ENCODE measurements at regions of chr18 and their contacts with region 1.

Region 1: DNA sequence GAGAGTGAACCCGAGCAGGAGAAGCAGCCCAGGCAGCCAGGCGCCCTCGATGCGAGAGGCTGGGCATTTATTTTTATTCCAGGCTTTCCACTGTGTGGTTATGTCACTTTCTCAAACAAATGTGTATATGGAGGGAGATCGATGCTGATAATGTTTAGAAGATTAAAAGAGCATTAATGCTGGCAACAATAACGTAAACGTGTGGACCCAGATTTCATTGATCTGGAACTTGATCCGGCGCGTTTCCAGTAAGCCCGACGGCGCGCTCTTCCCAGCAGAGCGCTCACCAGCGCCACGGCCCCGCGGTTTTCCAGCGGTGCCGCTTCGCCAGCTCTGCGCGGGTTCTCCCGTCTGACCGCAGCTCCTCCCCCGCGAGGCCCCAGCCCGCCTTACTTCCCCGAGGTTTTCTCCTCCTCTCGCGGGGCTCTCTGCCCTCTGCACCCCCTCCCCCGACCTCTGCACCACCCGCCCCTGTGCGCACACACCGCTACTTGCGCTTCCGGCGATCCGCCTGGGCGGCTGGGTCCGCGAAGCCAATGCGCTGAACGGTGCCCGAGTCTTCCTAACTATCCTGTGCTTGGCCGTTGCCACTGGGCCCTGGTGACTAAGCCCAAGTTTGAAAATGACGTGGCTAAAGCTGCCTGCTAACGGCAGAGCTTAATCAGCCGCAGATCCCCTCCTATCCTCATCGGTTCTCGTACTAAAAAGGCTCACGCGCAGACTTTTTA is 6.1 kb downstream of the ONECUT2 start:
- DNase-seq: no peak
- H3K4me3 Mint-ChIP-seq: peak overlapping the region; percentile 52
- H3K27ac Mint-ChIP-seq: peak overlapping the region; percentile 78
- H3K4me1 Mint-ChIP-seq: peaks cover 15% of the 10 kb centered on the region
- H3K27me3 Mint-ChIP-seq: peaks cover 78% of the 10 kb centered on the region

Region 2: DNA sequence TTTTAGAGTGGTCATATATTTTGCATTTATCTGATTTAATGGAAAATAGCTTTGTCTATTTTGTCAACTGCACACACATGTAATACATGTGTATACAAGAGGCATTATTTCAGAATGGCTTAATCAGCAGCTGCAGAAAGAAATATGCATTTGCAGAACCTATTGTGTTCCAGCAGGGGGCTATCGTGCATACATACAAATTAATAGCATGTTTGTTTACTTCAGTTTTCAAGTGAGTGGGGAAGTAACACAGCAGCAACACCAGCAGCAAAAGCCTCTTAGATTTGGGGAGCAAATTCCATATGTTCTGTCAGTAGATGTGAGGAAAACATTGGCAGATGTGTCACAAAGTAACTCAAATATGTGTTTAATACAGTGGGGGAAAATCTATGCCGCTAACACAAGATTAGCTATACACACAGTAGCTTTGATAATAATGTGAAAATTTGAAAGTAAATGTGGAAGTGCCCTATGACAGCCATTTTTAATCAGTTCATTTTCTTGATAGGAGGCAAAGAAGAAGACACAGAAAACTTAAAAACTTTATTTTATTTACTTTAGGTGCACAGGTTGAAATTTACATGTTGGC is 571.9 kb before region 1 on chr18:
- intact Hi-C with region 1: loop called (anchors 5 kb)
- DNase-seq: peak; percentile 65
- H3K4me3 Mint-ChIP-seq: no peak overlapping the region
- H3K27ac Mint-ChIP-seq: no peak overlapping the region
- H3K4me1 Mint-ChIP-seq: peaks cover 5% of the 10 kb centered on the region
- H3K27me3 Mint-ChIP-seq: no peaks in the 10 kb centered on the region

Region 3: GRCh38 chr18:57397440-57397839 is 43.8 kb before region 1 on chr18:
- intact Hi-C with region 1: no loop called
- DNase-seq: no peak
- H3K4me3 Mint-ChIP-seq: no peak overlapping the region
- H3K27ac Mint-ChIP-seq: no peak overlapping the region
- H3K4me1 Mint-ChIP-seq: no peaks in the 10 kb centered on the region
- H3K27me3 Mint-ChIP-seq: peaks cover 2% of the 10 kb centered on the region

Region 4: DNA sequence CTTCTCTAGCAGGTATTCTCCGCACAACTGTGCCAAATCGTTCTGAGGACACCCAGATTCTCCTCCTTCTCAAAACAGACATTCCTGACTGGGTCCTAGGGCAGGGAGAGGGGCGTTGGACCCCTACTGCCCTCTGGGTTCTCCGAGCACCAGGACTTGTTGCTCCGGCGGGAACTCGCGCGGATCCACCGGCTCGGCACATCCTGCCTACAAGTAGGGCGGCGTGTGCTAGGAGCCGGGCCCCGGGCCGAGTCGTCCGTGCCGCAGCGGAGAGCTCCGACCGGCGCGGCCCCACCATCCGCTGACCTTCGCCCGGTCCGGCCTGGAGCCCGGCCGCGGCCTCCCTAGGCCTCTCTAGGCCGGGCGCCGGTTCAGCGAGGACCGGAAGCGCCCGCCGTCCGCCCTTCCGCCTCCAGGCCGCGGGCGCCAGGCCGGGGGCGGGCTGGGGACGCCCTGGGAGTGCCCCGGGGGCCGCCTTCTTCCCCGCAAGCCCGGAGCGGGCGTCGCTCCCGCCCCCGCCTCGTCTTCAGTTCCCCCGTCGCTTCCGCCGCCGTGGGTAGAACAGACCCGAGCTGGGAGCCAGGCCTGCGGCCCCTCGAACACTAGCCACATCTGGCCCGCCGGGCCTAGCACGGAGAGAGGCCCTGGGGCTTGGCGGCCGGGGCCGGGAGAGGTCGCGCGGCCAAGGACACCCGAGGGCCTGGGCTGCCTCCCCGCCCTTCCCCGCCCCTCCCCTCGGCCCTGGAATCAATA is 13.6 kb before region 1 on chr18:
- intact Hi-C with region 1: loop called (anchors 1 kb)
- DNase-seq: no peak
- H3K4me3 Mint-ChIP-seq: no peak overlapping the region
- H3K27ac Mint-ChIP-seq: no peak overlapping the region
- H3K4me1 Mint-ChIP-seq: peaks cover 5% of the 10 kb centered on the region
- H3K27me3 Mint-ChIP-seq: peaks cover 58% of the 10 kb centered on the region

Region 5: GRCh38 chr18:57497372-57498294 is 56.4 kb after region 1 on chr18:
- intact Hi-C with region 1: no loop called
- DNase-seq: no peak
- H3K4me3 Mint-ChIP-seq: no peak overlapping the region
- H3K27ac Mint-ChIP-seq: no peak overlapping the region
- H3K4me1 Mint-ChIP-seq: no peaks in the 10 kb centered on the region
- H3K27me3 Mint-ChIP-seq: no peaks in the 10 kb centered on the region

Region 6: DNA sequence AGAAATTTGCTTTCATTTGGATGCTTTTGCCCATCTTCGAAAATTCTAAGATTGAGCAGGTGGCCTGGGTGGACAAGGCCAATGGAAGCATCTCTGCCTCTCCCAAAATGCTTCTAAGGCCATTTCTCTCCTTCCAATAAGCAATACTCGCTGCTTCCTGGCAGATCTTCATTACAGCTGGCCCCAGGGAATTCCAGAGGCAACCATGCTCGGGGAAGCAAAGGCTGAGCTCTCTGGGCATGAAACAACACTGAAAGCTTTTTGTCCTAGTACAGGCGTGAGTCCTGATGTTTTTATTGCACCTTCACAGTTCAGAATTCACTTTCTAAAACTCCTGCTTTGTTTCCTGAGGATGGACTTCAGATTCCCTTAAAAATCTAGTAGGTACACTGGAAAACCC is 591.0 kb after region 1 on chr18:
- intact Hi-C with region 1: no loop called
- DNase-seq: no peak
- H3K4me3 Mint-ChIP-seq: no peak overlapping the region
- H3K27ac Mint-ChIP-seq: no peak overlapping the region
- H3K4me1 Mint-ChIP-seq: no peaks in the 10 kb centered on the region
- H3K27me3 Mint-ChIP-seq: peaks cover 21% of the 10 kb centered on the region